Posterior cingulate gyrus (tissue), 11 donors: ENCODE measurements at regions of chr1 and their contacts with region 1.

Region 1: GRCh38 chr1:39189592-39190041 is 14.9 kb upstream of the MACF1 start:
- DNase-seq: no peak

Region 2: GRCh38 chr1:39258146-39258924 is 68.7 kb after region 1 on chr1:
- intact Hi-C with region 1: loop called (anchors 5 kb)
- DNase-seq: peak in 7 of 10 donors; percentile 54 to 93 (median 67)